HepG2 (cell line): ENCODE measurements at regions of chr3 and their contacts with region 1.

Region 1: GRCh38 chr3:45656575-45657363 is 32.4 kb upstream of the SACM1L start:
- DNase-seq: peak; percentile 90
- ATAC-seq: peak; percentile 93
- H3K4me3 ChIP-seq: no peak overlapping the region
- H3K27ac ChIP-seq: no peak overlapping the region
- H3K4me1 ChIP-seq: peaks cover 29% of the 10 kb centered on the region
- H3K27me3 ChIP-seq: no peaks in the 10 kb centered on the region
- CTCF ChIP-seq: peak; percentile 95
- EP300 ChIP-seq: no peak
- POLR2A ChIP-seq: no peak
- RAD21 ChIP-seq: peak; percentile 93

Region 2: DNA sequence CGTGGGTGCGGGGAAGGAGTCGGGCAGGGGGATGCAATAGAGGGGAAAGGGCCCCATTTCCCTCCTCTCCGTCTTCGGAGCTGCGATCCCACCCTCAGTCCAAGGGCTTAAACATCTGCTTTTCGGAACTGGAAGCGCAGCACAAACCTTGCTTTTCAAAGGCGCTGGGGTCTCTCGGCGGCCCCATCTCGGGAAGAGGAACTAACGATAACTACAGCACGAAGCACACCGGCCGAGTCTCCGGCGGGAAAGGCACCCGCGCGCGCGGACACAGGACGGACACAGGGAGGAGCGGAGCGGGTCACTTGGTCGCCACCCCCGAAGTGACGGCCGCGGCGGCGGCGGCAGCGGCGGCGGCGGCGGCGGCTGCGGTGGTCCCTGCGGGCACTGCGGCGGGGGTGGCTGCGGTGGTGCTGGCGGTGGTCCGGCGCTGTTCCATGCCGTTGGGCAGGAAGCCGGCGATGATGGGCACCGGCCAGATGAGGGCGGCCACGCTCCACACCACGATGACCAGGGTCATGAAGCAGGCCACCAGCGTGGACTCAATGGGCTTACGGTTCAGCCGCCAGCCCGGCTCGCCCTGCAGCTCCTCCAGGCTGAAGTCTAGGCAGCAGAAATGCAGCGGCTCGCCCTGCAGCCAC is 431.8 kb before region 1 on chr3:
- CTCF ChIA-PET with region 1: interaction called, 3 read pairs
- POLR2A ChIA-PET with region 1: no interaction called
- in situ Hi-C with region 1: loop called (anchors 10 kb)
- intact Hi-C with region 1: no loop called
- DNase-seq: peak; percentile 40
- ATAC-seq: peak; percentile 90
- H3K4me3 ChIP-seq: peak overlapping the region; percentile 16 to 67 (median 37); a peak in 5 of 6 replicates
- H3K27ac ChIP-seq: no peak overlapping the region
- H3K4me1 ChIP-seq: 0 out of 2 replicates have a peak, but pooled peaks cover 5% of the 10 kb centered on the region
- H3K27me3 ChIP-seq: peaks cover 4 to 72% of the 10 kb centered on the region in 2 experiments; a peak in 4 of 5 replicates
- CTCF ChIP-seq: peak; percentile 88
- EP300 ChIP-seq: no peak
- POLR2A ChIP-seq: no peak
- RAD21 ChIP-seq: peak; percentile 92

Region 3: GRCh38 chr3:45507820-45508317 is 148.9 kb before region 1 on chr3:
- CTCF ChIA-PET with region 1: interaction called, 18 read pairs
- POLR2A ChIA-PET with region 1: no interaction called
- in situ Hi-C with region 1: loop called (anchors 5 kb)
- intact Hi-C with region 1: loop called (anchors 1 kb)
- DNase-seq: no peak
- ATAC-seq: peak; percentile 70; the same call in 2 of the 3 replicates
- H3K4me3 ChIP-seq: no peak overlapping the region
- H3K27ac ChIP-seq: no peak overlapping the region
- H3K4me1 ChIP-seq: peaks cover 8% of the 10 kb centered on the region
- H3K27me3 ChIP-seq: no peaks in the 10 kb centered on the region
- CTCF ChIP-seq: no peak
- EP300 ChIP-seq: no peak
- POLR2A ChIP-seq: no peak
- RAD21 ChIP-seq: no peak

Region 4: DNA sequence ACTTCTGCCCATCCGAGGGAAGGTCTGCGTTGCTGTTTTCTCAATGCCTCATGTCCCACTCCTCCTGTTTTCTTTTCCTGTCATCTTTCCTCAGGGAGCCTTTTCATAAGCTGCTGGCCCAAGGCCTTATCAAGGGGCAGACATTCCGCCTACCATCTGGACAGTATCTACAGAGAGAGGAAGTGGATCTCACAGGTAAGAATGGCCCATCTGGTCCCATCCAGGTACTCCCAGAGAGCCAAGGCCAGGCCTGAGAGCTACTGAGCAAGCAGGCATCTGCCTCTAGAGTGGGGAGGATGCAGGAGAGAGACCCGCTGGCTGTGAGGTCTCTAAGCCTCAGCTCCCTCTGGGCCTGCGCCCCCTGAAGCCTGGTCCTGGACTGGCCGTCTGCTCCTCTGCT is 143.7 kb before region 1 on chr3:
- CTCF ChIA-PET with region 1: interaction called, 18 read pairs
- POLR2A ChIA-PET with region 1: no interaction called
- in situ Hi-C with region 1: loop called (anchors 5 kb)
- intact Hi-C with region 1: loop called (anchors 1 kb)
- DNase-seq: no peak
- ATAC-seq: no peak
- H3K4me3 ChIP-seq: no peak overlapping the region
- H3K27ac ChIP-seq: no peak overlapping the region
- H3K4me1 ChIP-seq: no peaks in the 10 kb centered on the region
- H3K27me3 ChIP-seq: no peaks in the 10 kb centered on the region
- CTCF ChIP-seq: no peak
- EP300 ChIP-seq: no peak
- POLR2A ChIP-seq: no peak
- RAD21 ChIP-seq: no peak

Region 5: GRCh38 chr3:45593708-45594609 is 62.8 kb before region 1 on chr3:
- CTCF ChIA-PET with region 1: interaction called, 63 read pairs
- POLR2A ChIA-PET with region 1: interaction called, 9 read pairs
- in situ Hi-C with region 1: loop called (anchors 5 kb)
- intact Hi-C with region 1: loop called (anchors 1 kb)
- DNase-seq: peak; percentile 67
- ATAC-seq: peak; percentile 84
- H3K4me3 ChIP-seq: peak overlapping the region; percentile 63 to 90 (median 85)
- H3K27ac ChIP-seq: peak overlapping the region; percentile 70
- H3K4me1 ChIP-seq: peaks cover 67% of the 10 kb centered on the region
- H3K27me3 ChIP-seq: 0 out of 5 replicates have a peak, but pooled peaks cover 0 to 2% of the 10 kb centered on the region in 2 experiments
- CTCF ChIP-seq: no peak
- EP300 ChIP-seq: no peak
- POLR2A ChIP-seq: 0 out of 4 replicates have a peak, but pooled peaks of 1 of the 2 experiments have one; percentile 15
- RAD21 ChIP-seq: no peak

Region 6: DNA sequence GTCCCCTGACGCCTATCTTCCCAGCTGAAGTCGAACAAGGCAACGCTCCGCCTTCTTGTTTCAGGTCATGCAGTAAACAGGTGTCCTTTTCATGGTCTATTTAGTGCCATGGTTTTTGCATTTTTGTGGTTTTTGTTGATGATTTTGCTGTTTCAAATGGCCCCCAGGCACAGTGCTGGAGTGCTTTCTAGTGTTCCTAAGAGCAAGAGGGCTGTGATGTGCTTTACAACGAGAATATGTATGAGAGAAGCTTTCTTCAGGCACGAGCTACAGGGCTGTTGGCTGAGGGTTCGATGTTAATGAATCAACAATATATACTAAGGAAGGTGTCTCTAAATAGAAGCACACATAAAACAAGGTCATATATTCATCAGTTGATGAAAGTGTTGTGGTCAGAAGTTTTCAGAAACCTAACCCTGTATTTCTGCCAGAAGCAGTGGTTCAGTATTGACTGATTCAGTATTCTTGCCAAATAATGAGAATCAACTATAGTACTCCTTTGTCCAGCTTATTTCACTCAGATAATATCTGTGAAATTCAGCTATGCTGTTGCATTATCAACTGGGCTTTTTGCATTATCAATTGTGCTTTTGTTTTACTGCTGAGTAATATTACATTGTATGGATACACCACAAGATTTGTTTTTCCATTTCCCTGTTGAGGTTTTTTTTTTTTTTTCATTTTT is 43.7 kb before region 1 on chr3:
- CTCF ChIA-PET with region 1: no interaction called
- POLR2A ChIA-PET with region 1: no interaction called
- in situ Hi-C with region 1: no loop called
- intact Hi-C with region 1: loop called (anchors 5 kb)
- DNase-seq: no peak
- ATAC-seq: no peak
- H3K4me3 ChIP-seq: no peak overlapping the region
- H3K27ac ChIP-seq: no peak overlapping the region
- H3K4me1 ChIP-seq: peaks cover 52% of the 10 kb centered on the region
- H3K27me3 ChIP-seq: no peaks in the 10 kb centered on the region
- CTCF ChIP-seq: no peak
- EP300 ChIP-seq: no peak
- POLR2A ChIP-seq: no peak
- RAD21 ChIP-seq: no peak

Region 7: GRCh38 chr3:45683417-45684326 is 26.9 kb after region 1 on chr3:
- CTCF ChIA-PET with region 1: no interaction called
- POLR2A ChIA-PET with region 1: no interaction called
- in situ Hi-C with region 1: no loop called
- intact Hi-C with region 1: no loop called
- DNase-seq: peak; percentile 49
- ATAC-seq: peak; percentile 57
- H3K4me3 ChIP-seq: peak overlapping the region; percentile 12 to 37 (median 37); a peak in 3 of 6 replicates
- H3K27ac ChIP-seq: peak overlapping the region; percentile 34
- H3K4me1 ChIP-seq: peaks cover 25% of the 10 kb centered on the region
- H3K27me3 ChIP-seq: no peaks in the 10 kb centered on the region; a peak in 1 of 5 replicates
- CTCF ChIP-seq: no peak
- EP300 ChIP-seq: no peak
- POLR2A ChIP-seq: no peak
- RAD21 ChIP-seq: no peak